T-cell (primary cell): ENCODE measurements at regions of chr5 and their contacts with region 1.

Region 1: GRCh38 chr5:116078199-116078598 is 6.6 kb upstream of the COMMD10 start:
- DNase-seq: no peak
- ATAC-seq: no peak
- H3K4me3 ChIP-seq: no peak overlapping the region
- H3K4me3 Mint-ChIP-seq: no peak overlapping the region
- H3K27ac ChIP-seq: no peak overlapping the region
- H3K27ac Mint-ChIP-seq: no peak overlapping the region
- H3K4me1 ChIP-seq: no peaks in the 10 kb centered on the region
- H3K4me1 Mint-ChIP-seq: peaks cover 16 to 26% (median 22%) of the 10 kb centered on the region in 3 donors
- H3K27me3 ChIP-seq: peaks cover 0 to 3% of the 10 kb centered on the region in 2 experiments
- H3K27me3 Mint-ChIP-seq: peaks cover 8% of the 10 kb centered on the region in 2 donors

Region 2: GRCh38 chr5:115625579-115626444 is 452.4 kb before region 1 on chr5 and contains the start of gene TMED7:
- CTCF ChIA-PET with region 1: interaction called in 1 of 2 experiments, 6 read pairs
- POLR2A ChIA-PET with region 1: interaction called in 1 of 2 experiments, 13 read pairs
- DNase-seq: peak; percentile 98 to 100 (median 99)
- ATAC-seq: peak; percentile 92 to 95 (median 93)
- H3K4me3 ChIP-seq: peak within 1 kb of the TSS; percentile 62 to 83
- H3K4me3 Mint-ChIP-seq: no peak within 1 kb of the TSS
- H3K27ac ChIP-seq: peak within 1 kb of the TSS; percentile 85
- H3K27ac Mint-ChIP-seq: peak within 1 kb of the TSS in 1 of 2 donors; percentile 96
- H3K4me1 ChIP-seq: peaks cover 13 to 22% of the 10 kb centered on the region in 2 experiments
- H3K4me1 Mint-ChIP-seq: peaks cover 32 to 35% (median 34%) of the 10 kb centered on the region in 3 donors
- H3K27me3 ChIP-seq: no peaks in the 10 kb centered on the region
- H3K27me3 Mint-ChIP-seq: no peaks in the 10 kb centered on the region
- total RNA-seq, gene TMED7: 43.2 to 58.0 (median 57.7) TPM